ENCODE measurements at regions of chr2 and their contacts with region 1.

Region 1: GRCh38 chr2:148067801-148068200 is 46.9 kb downstream of the MBD5 start:
- DNase-seq: no peak
- ATAC-seq: no peak
- H3K4me3 ChIP-seq: no peak overlapping the region
- H3K27ac ChIP-seq: no peak overlapping the region
- H3K4me1 ChIP-seq: no peaks in the 10 kb centered on the region
- H3K27me3 ChIP-seq: no peaks in the 10 kb centered on the region
- CTCF ChIP-seq: no peak
- EP300 ChIP-seq: no peak
- POLR2A ChIP-seq: no peak
- RAD21 ChIP-seq: no peak

Region 2: GRCh38 chr2:148020111-148021058 is 47.4 kb before region 1 on chr2 and contains the start of gene ORC4:
- CTCF ChIA-PET with region 1: interaction called, 3 read pairs
- POLR2A ChIA-PET with region 1: interaction called, 11 read pairs
- RAD21 ChIA-PET with region 1: interaction called, 10 read pairs
- SMC1A ChIA-PET with region 1: interaction called, 6 read pairs
- in situ Hi-C with region 1: no loop called
- intact Hi-C with region 1: no loop called
- DNase-seq: peak; percentile 99
- ATAC-seq: peak; percentile 81
- H3K4me3 ChIP-seq: peak within 1 kb of the TSS; percentile 99
- H3K27ac ChIP-seq: peak within 1 kb of the TSS; percentile 96
- H3K4me1 ChIP-seq: no peaks in the 10 kb centered on the region
- H3K27me3 ChIP-seq: no peaks in the 10 kb centered on the region
- CTCF ChIP-seq: peak in 2 of 3 experiments; percentile 19 to 26; a peak in 2 of 6 replicates
- EP300 ChIP-seq: no peak; a peak in 1 of 4 replicates
- POLR2A ChIP-seq: peak; percentile 90
- RAD21 ChIP-seq: peak; percentile 19; the same call in 1 of the 2 replicates
- polyA plus RNA-seq, gene ORC4: 31.3 to 71.3 TPM